ENCODE measurements at regions of chr3 and their contacts with region 1.

Region 1: DNA sequence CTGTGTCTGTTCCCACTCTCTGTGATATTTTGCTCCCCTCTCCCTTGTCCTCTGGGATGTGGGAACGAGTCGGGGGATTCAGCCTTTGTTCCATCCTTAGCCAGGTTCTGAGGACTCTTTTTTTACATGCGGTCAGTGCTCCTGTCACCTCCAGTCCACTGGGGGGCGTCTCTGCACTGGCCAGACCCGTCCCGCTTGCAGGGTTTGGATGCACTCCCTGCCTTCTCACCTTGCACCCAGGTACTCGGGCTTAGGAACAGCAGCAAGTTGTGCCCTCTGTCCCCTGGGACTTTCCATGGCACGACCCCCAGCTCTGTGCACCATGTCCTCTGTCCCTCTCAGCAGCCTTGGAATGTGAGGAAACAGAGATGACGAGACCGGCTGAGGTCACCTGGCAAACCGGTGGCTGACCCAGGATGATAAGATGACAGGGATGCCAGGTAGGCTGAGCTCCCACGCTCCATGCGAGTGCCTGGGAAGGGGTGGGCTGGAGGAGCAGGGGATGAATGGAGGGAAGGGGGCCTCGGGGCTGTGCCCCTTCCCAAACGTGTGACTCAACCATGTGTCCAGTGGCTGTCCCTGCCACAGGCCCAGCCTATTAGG is 27.3 kb upstream of the FGD5 start:
- DNase-seq: peak; percentile 76 to 83 (median 82)
- ATAC-seq: peak; percentile 96
- H3K4me3 ChIP-seq: no peak overlapping the region
- H3K27ac ChIP-seq: no peak overlapping the region
- H3K4me1 ChIP-seq: no peaks in the 10 kb centered on the region; a peak in 2 of 5 replicates
- H3K27me3 ChIP-seq: peaks cover 16 to 59% of the 10 kb centered on the region in 2 experiments; a peak in 3 of 5 replicates
- CTCF ChIP-seq: peak; percentile 87 to 95 (median 94)
- EP300 ChIP-seq: no peak
- POLR2A ChIP-seq: no peak
- RAD21 ChIP-seq: peak; percentile 77 to 96

Region 2: GRCh38 chr3:14863333-14864100 is 72.1 kb after region 1 on chr3:
- CTCF ChIA-PET with region 1: no interaction called
- POLR2A ChIA-PET with region 1: interaction called, 3 read pairs
- in situ Hi-C with region 1: no loop called
- intact Hi-C with region 1: loop called (anchors 5 kb)
- DNase-seq: no peak
- ATAC-seq: peak; percentile 61
- H3K4me3 ChIP-seq: no peak overlapping the region
- H3K27ac ChIP-seq: no peak overlapping the region
- H3K4me1 ChIP-seq: no peaks in the 10 kb centered on the region
- H3K27me3 ChIP-seq: peaks cover 36 to 75% of the 10 kb centered on the region in 2 experiments
- CTCF ChIP-seq: peak; percentile 41 to 51 (median 43); a peak in 5 of 6 replicates
- EP300 ChIP-seq: no peak
- POLR2A ChIP-seq: no peak
- RAD21 ChIP-seq: peak in 1 of 2 experiments; percentile 46; a peak in 2 of 4 replicates

Region 3: GRCh38 chr3:14915636-14916222 is 124.3 kb after region 1 on chr3:
- CTCF ChIA-PET with region 1: interaction called, 20 read pairs
- POLR2A ChIA-PET with region 1: no interaction called
- in situ Hi-C with region 1: loop called (anchors 5 kb)
- intact Hi-C with region 1: loop called (anchors 1 kb)
- DNase-seq: no peak
- ATAC-seq: peak; percentile 59; the same call in 2 of the 3 replicates
- H3K4me3 ChIP-seq: no peak overlapping the region
- H3K27ac ChIP-seq: no peak overlapping the region
- H3K4me1 ChIP-seq: no peaks in the 10 kb centered on the region
- H3K27me3 ChIP-seq: peaks cover 39 to 68% of the 10 kb centered on the region in 2 experiments
- CTCF ChIP-seq: peak; percentile 49 to 56 (median 53)
- EP300 ChIP-seq: no peak
- POLR2A ChIP-seq: no peak
- RAD21 ChIP-seq: peak; percentile 71 to 77

Region 4: GRCh38 chr3:15032650-15033049 is 241.2 kb after region 1 on chr3:
- CTCF ChIA-PET with region 1: no interaction called
- POLR2A ChIA-PET with region 1: no interaction called
- in situ Hi-C with region 1: no loop called
- intact Hi-C with region 1: no loop called
- DNase-seq: no peak
- ATAC-seq: no peak
- H3K4me3 ChIP-seq: no peak overlapping the region
- H3K27ac ChIP-seq: no peak overlapping the region; the same call in 2 of the 3 replicates
- H3K4me1 ChIP-seq: no peaks in the 10 kb centered on the region
- H3K27me3 ChIP-seq: no peaks in the 10 kb centered on the region
- CTCF ChIP-seq: no peak
- EP300 ChIP-seq: no peak
- POLR2A ChIP-seq: no peak
- RAD21 ChIP-seq: no peak

Measured in K562 (cell line).